Activated CD4-positive, alpha-beta memory T cell treated with anti-CD3 and anti-CD28 coated beads for 36 hours (primary cell): ENCODE measurements at regions of chr17 and their contacts with region 1.

Region 1: GRCh38 chr17:39153599-39154051 is 2.2 kb upstream of the PLXDC1 start:
- DNase-seq: peak; percentile 96
- H3K4me3 Mint-ChIP-seq: peak overlapping the region; percentile 94
- H3K27ac Mint-ChIP-seq: peak overlapping the region; percentile 90
- H3K4me1 Mint-ChIP-seq: peaks cover 30% of the 10 kb centered on the region
- H3K27me3 Mint-ChIP-seq: peaks cover 8% of the 10 kb centered on the region

Region 2: GRCh38 chr17:38853292-38854219 is 300.1 kb before region 1 on chr17 and contains the start of gene RPL23:
- CTCF ChIA-PET with region 1: interaction called, 9 read pairs
- POLR2A ChIA-PET with region 1: interaction called, 4 read pairs
- intact Hi-C with region 1: loop called (anchors 5 kb)
- DNase-seq: peak; percentile 95
- H3K4me3 Mint-ChIP-seq: peak within 1 kb of the TSS; percentile 99
- H3K27ac Mint-ChIP-seq: peak within 1 kb of the TSS; percentile 99
- H3K4me1 Mint-ChIP-seq: peaks cover 38% of the 10 kb centered on the region
- H3K27me3 Mint-ChIP-seq: no peaks in the 10 kb centered on the region
- total RNA-seq, gene RPL23: 1,774 to 1,791 TPM

Region 3: GRCh38 chr17:38982858-38983746 is 170.5 kb before region 1 on chr17:
- CTCF ChIA-PET with region 1: interaction called, 227 read pairs
- POLR2A ChIA-PET with region 1: interaction called, 3 read pairs
- intact Hi-C with region 1: loop called (anchors 1 kb)
- DNase-seq: peak; percentile 50
- H3K4me3 Mint-ChIP-seq: no peak overlapping the region
- H3K27ac Mint-ChIP-seq: peak overlapping the region; percentile 11
- H3K4me1 Mint-ChIP-seq: peaks cover 3% of the 10 kb centered on the region
- H3K27me3 Mint-ChIP-seq: peaks cover 1% of the 10 kb centered on the region

Region 4: DNA sequence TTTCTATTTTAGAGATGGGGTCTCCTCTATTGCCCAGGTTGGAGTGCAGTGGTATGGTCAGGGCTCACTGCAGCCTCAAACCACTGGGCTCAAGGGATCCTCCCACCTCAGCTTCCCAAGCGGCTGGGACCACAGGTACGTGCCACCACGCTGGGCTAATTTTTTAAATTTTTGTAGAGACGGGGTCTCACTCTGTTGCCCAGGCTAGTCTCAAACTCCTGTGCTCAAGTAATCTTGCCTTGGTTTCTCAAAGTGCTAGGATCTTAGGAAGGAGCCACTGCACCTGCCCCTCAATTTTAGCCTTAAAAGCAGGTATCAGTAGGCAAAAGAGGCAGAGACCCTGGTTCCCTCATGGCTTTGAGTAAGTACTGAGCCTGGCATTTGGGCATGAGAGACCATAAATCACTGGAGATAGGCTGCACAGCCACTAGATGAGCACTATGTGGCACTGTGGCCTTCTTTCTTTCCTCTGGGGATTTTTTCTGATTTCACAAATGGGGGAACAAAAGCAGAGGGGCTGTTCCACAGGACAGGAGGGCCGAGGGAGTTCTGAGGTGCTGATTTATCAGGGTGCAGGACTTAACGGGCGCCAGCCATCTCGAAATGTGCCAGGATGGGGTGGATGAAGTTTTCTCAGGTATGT is 84.4 kb before region 1 on chr17:
- CTCF ChIA-PET with region 1: interaction called, 15 read pairs
- POLR2A ChIA-PET with region 1: no interaction called
- intact Hi-C with region 1: loop called (anchors 1 kb)
- DNase-seq: no peak
- H3K4me3 Mint-ChIP-seq: no peak overlapping the region
- H3K27ac Mint-ChIP-seq: no peak overlapping the region
- H3K4me1 Mint-ChIP-seq: peaks cover 5% of the 10 kb centered on the region
- H3K27me3 Mint-ChIP-seq: no peaks in the 10 kb centered on the region

Region 5: DNA sequence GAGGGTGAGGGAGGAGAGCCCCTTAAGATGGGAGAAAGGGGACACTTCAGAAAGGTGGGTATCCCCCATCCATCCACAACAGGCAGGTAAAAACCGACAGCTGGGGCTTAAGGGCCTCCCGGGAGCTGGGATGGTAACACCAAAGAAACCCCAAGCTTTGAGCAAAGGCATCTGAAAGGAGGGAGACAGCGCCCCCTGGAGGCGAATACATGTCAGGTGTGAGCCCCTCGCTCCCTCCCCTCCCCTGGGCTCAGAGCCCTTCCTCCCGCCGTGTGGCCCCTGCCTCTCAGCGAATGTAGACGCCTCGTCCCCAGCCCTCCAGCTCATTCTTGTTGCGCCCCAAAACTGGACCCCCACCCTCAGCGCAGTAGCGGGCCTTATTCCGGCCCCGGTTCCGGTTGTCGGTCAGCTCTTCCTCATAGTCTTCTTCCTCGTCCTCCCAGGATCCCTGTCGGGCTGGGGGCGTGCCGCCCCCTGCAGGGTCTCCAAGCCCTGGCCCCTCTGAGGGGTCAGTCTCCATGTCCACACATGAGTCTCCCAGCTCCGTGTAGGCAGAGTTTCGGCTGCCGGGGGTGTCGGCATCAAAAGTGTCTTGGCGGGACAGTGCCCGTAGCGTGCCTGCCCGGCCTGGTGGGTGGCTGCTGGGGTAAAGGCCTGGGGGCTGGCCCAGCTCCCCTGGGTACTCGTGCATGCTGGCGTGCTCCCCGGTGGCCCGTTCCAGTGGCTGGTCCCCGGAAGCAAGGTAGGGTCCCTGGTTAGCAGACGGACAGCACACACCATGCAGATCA is 21.5 kb after region 1 on chr17:
- CTCF ChIA-PET with region 1: interaction called, 43 read pairs
- POLR2A ChIA-PET with region 1: no interaction called
- intact Hi-C with region 1: no loop called
- DNase-seq: peak; percentile 80
- H3K4me3 Mint-ChIP-seq: no peak overlapping the region
- H3K27ac Mint-ChIP-seq: no peak overlapping the region
- H3K4me1 Mint-ChIP-seq: no peaks in the 10 kb centered on the region
- H3K27me3 Mint-ChIP-seq: no peaks in the 10 kb centered on the region

Region 6: GRCh38 chr17:39244600-39245570 is 91.3 kb after region 1 on chr17:
- CTCF ChIA-PET with region 1: interaction called, 17 read pairs
- POLR2A ChIA-PET with region 1: no interaction called
- intact Hi-C with region 1: no loop called
- DNase-seq: peak; percentile 91
- H3K4me3 Mint-ChIP-seq: no peak overlapping the region
- H3K27ac Mint-ChIP-seq: no peak overlapping the region
- H3K4me1 Mint-ChIP-seq: peaks cover 5% of the 10 kb centered on the region
- H3K27me3 Mint-ChIP-seq: no peaks in the 10 kb centered on the region